A549 (cell line): ENCODE measurements at regions of chr9 and their contacts with region 1.

Region 1: GRCh38 chr9:38068866-38069629 is at the start of gene SHB:
- DNase-seq: peak; percentile 71 to 83
- ATAC-seq: peak; percentile 64 to 65
- H3K4me3 ChIP-seq: peak within 1 kb of the TSS; percentile 93
- H3K27ac ChIP-seq: peak within 1 kb of the TSS; percentile 95 to 100
- H3K4me1 ChIP-seq: peaks cover 37% of the 10 kb centered on the region
- CTCF ChIP-seq: peak; percentile 22; the same call in 2 of the 3 replicates
- EP300 ChIP-seq: no peak
- POLR2A ChIP-seq: peak; percentile 87
- RAD21 ChIP-seq: no peak; a peak in 3 of 5 replicates
- polyA plus RNA-seq, gene SHB: 15.4 and 16.4 TPM in 2 replicates

Region 2: GRCh38 chr9:37963936-37964739 is 104.9 kb before region 1 on chr9:
- CTCF ChIA-PET with region 1: interaction called, 13 read pairs
- POLR2A ChIA-PET with region 1: no interaction called
- DNase-seq: peak; percentile 54 to 83
- ATAC-seq: peak; percentile 59 to 78; a peak in 4 of 6 replicates
- H3K4me3 ChIP-seq: no peak overlapping the region
- H3K27ac ChIP-seq: peak overlapping the region; percentile 74 to 85
- H3K4me1 ChIP-seq: peaks cover 60% of the 10 kb centered on the region
- CTCF ChIP-seq: no peak
- EP300 ChIP-seq: peak in 1 of 2 experiments; percentile 29; a peak in 1 of 5 replicates
- POLR2A ChIP-seq: no peak
- RAD21 ChIP-seq: no peak; a peak in 1 of 5 replicates

Region 3: GRCh38 chr9:38017149-38017884 is 51.7 kb before region 1 on chr9:
- CTCF ChIA-PET with region 1: interaction called, 49 read pairs
- POLR2A ChIA-PET with region 1: interaction called, 19 read pairs
- DNase-seq: peak; percentile 63 to 73
- ATAC-seq: peak; percentile 55 to 58; a peak in 5 of 6 replicates
- H3K4me3 ChIP-seq: 0 out of 3 replicates have a peak overlapping the region, but pooled peaks have one; percentile 7
- H3K27ac ChIP-seq: peak overlapping the region; percentile 96 to 97
- H3K4me1 ChIP-seq: peaks cover 68% of the 10 kb centered on the region
- CTCF ChIP-seq: peak; percentile 60
- EP300 ChIP-seq: no peak; a peak in 1 of 5 replicates
- POLR2A ChIP-seq: no peak
- RAD21 ChIP-seq: peak; percentile 81 to 84

Region 4: GRCh38 chr9:38035873-38036272 is 33.2 kb before region 1 on chr9:
- CTCF ChIA-PET with region 1: interaction called, 17 read pairs
- POLR2A ChIA-PET with region 1: no interaction called
- DNase-seq: peak; percentile 61 to 62
- ATAC-seq: peak; percentile 49 to 63
- H3K4me3 ChIP-seq: no peak overlapping the region
- H3K27ac ChIP-seq: peak overlapping the region; percentile 84 to 97
- H3K4me1 ChIP-seq: peaks cover 96% of the 10 kb centered on the region
- CTCF ChIP-seq: no peak
- EP300 ChIP-seq: peak in 1 of 2 experiments; percentile 31; a peak in 1 of 5 replicates
- POLR2A ChIP-seq: no peak
- RAD21 ChIP-seq: no peak

Region 5: GRCh38 chr9:38053697-38054461 is 15.2 kb before region 1 on chr9:
- CTCF ChIA-PET with region 1: interaction called, 52 read pairs
- POLR2A ChIA-PET with region 1: interaction called, 3 read pairs
- DNase-seq: no peak
- ATAC-seq: no peak
- H3K4me3 ChIP-seq: no peak overlapping the region
- H3K27ac ChIP-seq: peak overlapping the region in 1 of 2 experiments; percentile 56; a peak in 2 of 6 replicates
- H3K4me1 ChIP-seq: peaks cover 64% of the 10 kb centered on the region
- CTCF ChIP-seq: no peak
- EP300 ChIP-seq: no peak
- POLR2A ChIP-seq: no peak
- RAD21 ChIP-seq: no peak

Region 6: DNA sequence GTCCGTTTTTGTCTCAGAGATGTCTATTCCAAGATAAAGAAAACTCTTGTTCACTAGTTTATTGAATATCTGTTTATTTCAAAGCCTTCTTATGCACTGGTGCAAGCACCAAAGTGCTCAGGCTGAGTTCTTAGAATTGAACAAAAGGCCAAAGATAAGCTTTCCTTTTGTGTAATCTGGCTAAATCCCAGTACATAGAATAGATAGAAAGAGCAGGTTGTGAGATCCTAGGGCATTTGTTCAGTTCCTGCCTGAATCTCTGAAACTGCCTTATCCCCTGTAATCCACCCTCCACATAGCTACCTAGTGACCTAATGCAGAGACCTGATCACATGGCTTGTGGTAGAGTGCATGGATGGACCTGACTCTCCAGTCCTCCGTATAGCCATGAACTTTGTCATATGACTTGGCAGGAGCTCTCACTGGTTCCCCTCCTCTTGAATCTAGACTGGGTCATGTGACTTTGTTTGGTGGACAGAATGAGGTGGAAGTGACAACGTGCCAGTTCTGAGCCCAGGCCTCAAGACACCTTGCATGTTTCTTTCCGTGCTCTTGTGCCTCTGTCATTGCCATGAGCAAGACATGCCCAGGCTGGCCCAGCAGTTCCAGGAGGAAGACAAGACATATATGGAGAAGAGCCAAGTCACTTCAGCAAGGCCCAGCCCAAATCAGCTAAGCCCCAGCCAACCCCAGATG is 139.3 kb after region 1 on chr9:
- CTCF ChIA-PET with region 1: no interaction called
- POLR2A ChIA-PET with region 1: no interaction called
- DNase-seq: no peak
- ATAC-seq: no peak
- H3K4me3 ChIP-seq: no peak overlapping the region
- H3K27ac ChIP-seq: no peak overlapping the region
- H3K4me1 ChIP-seq: peaks cover 6% of the 10 kb centered on the region; the same call in 1 of the 3 replicates
- CTCF ChIP-seq: no peak
- EP300 ChIP-seq: no peak
- POLR2A ChIP-seq: no peak
- RAD21 ChIP-seq: no peak